PC-9 (cell line): ENCODE measurements at regions of chr10 and their contacts with region 1.

Region 1: GRCh38 chr10:100481462-100482081 is 18.8 kb downstream of the WNT8B start:
- DNase-seq: peak; percentile 67 to 86
- H3K4me3 ChIP-seq: peak overlapping the region; percentile 55
- H3K27ac ChIP-seq: no peak overlapping the region
- H3K4me1 ChIP-seq: no peaks in the 10 kb centered on the region
- H3K27me3 ChIP-seq: peaks cover 36% of the 10 kb centered on the region; the same call in 1 of the 2 replicates
- CTCF ChIP-seq: no peak

Region 2: DNA sequence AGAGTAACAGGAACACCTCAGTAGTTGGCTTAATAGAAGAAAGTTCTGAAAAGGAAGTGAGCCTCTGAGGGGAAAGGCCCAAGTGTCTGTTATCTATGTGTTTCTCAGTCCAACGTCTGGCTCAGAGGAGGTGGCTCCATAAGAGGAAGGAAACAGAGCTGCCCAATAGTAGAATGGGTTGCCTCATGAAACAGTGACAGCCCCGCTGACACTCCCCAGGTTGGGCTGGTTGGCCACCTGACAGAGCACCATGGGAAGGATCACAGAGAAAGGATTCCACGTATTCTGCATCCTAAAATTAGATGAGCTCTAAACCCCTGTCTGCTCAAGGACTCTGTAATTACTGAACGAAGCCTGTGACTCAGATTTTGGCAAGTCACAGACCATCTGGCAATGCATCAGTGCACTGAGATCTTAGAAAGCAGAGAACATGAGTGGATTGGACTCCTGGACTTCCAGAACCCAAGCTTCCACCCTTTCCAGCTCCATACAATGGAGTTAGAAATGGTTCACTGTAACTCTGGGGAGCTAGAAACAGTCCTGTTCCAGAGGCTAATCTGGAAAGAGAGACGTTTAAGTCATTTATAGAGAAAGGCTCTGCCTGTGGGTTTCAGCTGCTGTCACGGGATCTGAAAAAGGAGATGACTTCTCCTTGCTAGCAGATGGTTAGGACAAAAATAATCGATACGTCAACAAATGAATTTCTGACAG is 154.4 kb before region 1 on chr10:
- CTCF ChIA-PET with region 1: interaction called, 12 read pairs
- POLR2A ChIA-PET with region 1: no interaction called
- intact Hi-C with region 1: no loop called
- DNase-seq: no peak
- H3K4me3 ChIP-seq: no peak overlapping the region
- H3K27ac ChIP-seq: no peak overlapping the region
- H3K4me1 ChIP-seq: no peaks in the 10 kb centered on the region
- H3K27me3 ChIP-seq: peaks cover 88% of the 10 kb centered on the region
- CTCF ChIP-seq: no peak